Activated CD4-positive, alpha-beta T cell treated with anti-CD3 and anti-CD28 coated beads for 36 hours (primary cell): ENCODE measurements at regions of chr18 and their contacts with region 1.

Region 1: GRCh38 chr18:3062798-3063680 is 50.1 kb upstream of the LPIN2 start:
- DNase-seq: peak; percentile 88
- ATAC-seq: peak; percentile 34
- H3K4me3 Mint-ChIP-seq: peak overlapping the region; percentile 2
- H3K27ac Mint-ChIP-seq: peak overlapping the region; percentile 99
- H3K4me1 Mint-ChIP-seq: peaks cover 65% of the 10 kb centered on the region
- H3K27me3 Mint-ChIP-seq: no peaks in the 10 kb centered on the region

Region 2: GRCh38 chr18:2881088-2881839 is 181.8 kb before region 1 on chr18:
- CTCF ChIA-PET with region 1: no interaction called
- POLR2A ChIA-PET with region 1: no interaction called
- intact Hi-C with region 1: no loop called
- DNase-seq: no peak
- ATAC-seq: peak; percentile 32
- H3K4me3 Mint-ChIP-seq: peak overlapping the region; percentile 49
- H3K27ac Mint-ChIP-seq: peak overlapping the region; percentile 53
- H3K4me1 Mint-ChIP-seq: peaks cover 25% of the 10 kb centered on the region
- H3K27me3 Mint-ChIP-seq: no peaks in the 10 kb centered on the region

Region 3: DNA sequence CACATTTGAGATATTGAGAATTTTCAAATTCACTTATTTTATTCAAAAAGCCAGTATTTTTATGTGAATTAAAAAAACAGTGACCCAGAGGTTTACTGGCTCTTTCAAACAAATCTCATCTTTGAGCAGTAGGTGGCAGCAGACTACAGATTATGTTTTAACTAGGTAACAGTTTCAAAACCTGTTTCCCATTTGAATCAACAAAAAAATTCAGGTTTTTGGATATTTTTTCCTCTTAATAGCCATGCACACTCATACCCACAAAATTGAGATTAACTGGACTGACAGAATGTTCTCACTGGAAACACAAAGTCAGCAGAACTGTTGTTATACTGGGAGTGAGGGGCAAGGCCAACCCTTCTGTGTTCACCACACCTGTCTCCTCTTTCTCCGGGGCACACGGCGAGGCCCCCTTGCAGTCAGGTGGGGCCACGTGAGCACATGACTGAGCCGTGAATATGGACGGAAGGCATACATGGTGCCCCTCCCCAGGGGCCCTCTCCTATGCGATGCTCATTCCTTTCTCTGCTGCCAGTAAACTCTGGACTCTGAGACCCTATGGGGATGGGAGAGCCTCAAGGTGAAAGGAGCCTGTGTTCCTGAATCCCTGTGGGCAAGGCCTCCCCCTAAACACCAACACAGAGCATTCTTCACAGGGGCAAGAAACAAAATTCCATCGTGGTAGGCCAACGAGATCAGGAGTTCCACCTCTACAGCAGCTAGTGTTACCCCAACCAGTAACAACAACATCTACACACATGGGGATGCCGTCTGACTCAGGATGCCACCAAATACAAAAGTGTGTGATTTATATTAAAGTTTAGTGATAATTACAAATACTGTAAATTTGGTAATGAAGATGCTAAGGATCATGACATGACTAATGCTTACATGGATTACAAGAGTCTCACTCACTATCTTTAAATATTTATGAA is 130.5 kb before region 1 on chr18:
- CTCF ChIA-PET with region 1: interaction called, 18 read pairs
- POLR2A ChIA-PET with region 1: no interaction called
- intact Hi-C with region 1: loop called (anchors 1 kb)
- DNase-seq: peak; percentile 50
- ATAC-seq: peak; percentile 60
- H3K4me3 Mint-ChIP-seq: no peak overlapping the region
- H3K27ac Mint-ChIP-seq: peak overlapping the region; percentile 81
- H3K4me1 Mint-ChIP-seq: peaks cover 41% of the 10 kb centered on the region
- H3K27me3 Mint-ChIP-seq: no peaks in the 10 kb centered on the region

Region 4: GRCh38 chr18:2978646-2979045 is 84.4 kb before region 1 on chr18:
- CTCF ChIA-PET with region 1: interaction called, 7 read pairs
- POLR2A ChIA-PET with region 1: no interaction called
- intact Hi-C with region 1: loop called (anchors 1 kb)
- DNase-seq: peak; percentile 72
- ATAC-seq: peak; percentile 27
- H3K4me3 Mint-ChIP-seq: peak overlapping the region; percentile 74
- H3K27ac Mint-ChIP-seq: peak overlapping the region; percentile 98
- H3K4me1 Mint-ChIP-seq: peaks cover 83% of the 10 kb centered on the region
- H3K27me3 Mint-ChIP-seq: no peaks in the 10 kb centered on the region

Region 5: GRCh38 chr18:3007491-3007890 is 55.5 kb before region 1 on chr18:
- CTCF ChIA-PET with region 1: interaction called, 12 read pairs
- POLR2A ChIA-PET with region 1: interaction called, 4 read pairs
- intact Hi-C with region 1: no loop called
- DNase-seq: no peak
- ATAC-seq: no peak
- H3K4me3 Mint-ChIP-seq: no peak overlapping the region
- H3K27ac Mint-ChIP-seq: no peak overlapping the region
- H3K4me1 Mint-ChIP-seq: peaks cover 58% of the 10 kb centered on the region
- H3K27me3 Mint-ChIP-seq: no peaks in the 10 kb centered on the region

Region 6: DNA sequence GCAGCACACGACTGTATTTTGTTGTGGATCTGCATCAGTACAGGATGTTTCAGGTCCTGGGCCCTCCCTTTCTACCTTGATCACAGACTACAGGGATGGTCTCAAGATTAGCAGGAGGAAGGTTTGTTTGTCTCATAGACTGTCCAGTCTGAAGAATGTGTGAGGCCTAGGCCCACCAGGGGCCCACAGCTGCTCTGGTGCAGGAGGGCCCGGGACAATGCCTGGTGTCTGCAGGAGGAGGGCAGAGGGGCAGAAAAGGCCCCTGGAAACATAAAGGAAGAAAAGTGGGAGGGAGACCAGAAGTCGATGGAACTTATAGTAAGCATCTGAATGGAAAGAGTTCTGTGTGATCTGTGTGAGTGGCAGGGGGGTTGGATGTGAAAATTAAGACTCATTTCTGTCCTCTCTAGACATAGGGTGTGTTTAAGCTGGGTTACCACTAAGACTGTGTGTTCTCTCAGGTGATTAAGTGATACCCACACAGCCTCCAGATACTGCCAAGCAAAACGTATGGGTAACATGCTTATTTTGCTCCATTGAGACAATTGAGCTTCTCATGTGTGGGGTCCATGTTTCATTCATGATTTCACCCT is 16.7 kb before region 1 on chr18:
- CTCF ChIA-PET with region 1: interaction called, 9 read pairs
- POLR2A ChIA-PET with region 1: no interaction called
- intact Hi-C with region 1: loop called in 1 of 2 experiments (anchors 1 kb)
- DNase-seq: peak; percentile 53
- ATAC-seq: peak; percentile 100
- H3K4me3 Mint-ChIP-seq: no peak overlapping the region
- H3K27ac Mint-ChIP-seq: peak overlapping the region; percentile 67
- H3K4me1 Mint-ChIP-seq: peaks cover 27% of the 10 kb centered on the region
- H3K27me3 Mint-ChIP-seq: no peaks in the 10 kb centered on the region

Region 7: DNA sequence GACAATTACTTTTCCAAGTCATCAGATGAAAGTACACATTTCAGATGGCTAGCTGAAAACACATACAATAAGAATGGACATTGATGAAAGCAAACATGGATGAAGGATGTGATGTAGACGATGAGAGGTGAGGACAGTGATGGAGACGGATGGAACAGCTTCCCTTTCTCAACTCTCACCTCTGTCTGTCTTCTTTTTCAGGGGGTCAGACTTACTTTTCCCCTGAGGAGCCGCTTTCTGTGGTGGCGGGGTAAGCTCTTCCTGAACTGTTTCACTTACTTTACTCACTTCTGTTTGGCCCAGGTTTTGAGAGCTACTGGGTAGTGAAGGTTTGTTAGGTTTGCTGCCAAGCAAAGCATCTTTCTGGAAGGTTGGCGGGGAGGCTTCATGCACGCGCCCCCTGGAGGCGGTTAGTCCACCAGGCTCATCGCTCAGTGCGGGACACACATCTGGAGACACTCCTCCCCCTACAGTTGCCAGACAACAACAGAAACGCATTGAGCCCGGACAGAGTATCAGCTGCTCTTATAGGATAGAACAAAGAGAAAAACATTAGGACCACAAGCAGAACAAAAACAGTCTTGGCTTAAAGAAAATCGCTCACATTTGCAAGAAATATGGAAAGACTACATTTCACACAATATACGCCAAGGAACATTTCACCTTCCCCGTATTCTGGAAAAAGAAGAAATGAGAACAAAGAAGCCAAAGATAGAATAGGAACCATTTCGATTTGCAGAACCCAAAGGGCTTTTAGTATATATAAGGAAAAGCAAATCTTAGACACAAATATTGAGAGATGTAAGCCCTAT is 66.2 kb after region 1 on chr18:
- CTCF ChIA-PET with region 1: interaction called, 40 read pairs
- POLR2A ChIA-PET with region 1: no interaction called
- intact Hi-C with region 1: no loop called
- DNase-seq: peak; percentile 92
- ATAC-seq: peak; percentile 99
- H3K4me3 Mint-ChIP-seq: no peak overlapping the region
- H3K27ac Mint-ChIP-seq: no peak overlapping the region
- H3K4me1 Mint-ChIP-seq: peaks cover 10% of the 10 kb centered on the region
- H3K27me3 Mint-ChIP-seq: no peaks in the 10 kb centered on the region